Activated T-helper 1 cell treated with anti-CD3 and anti-CD28 coated beads, Interleukin-12 subunit alpha, Interleukin-12 subunit beta, Interleukin-2, Interleukin-4 antibody, amounts not matched to agents 30 ng/mL and 10 ng/mL and 1 ng/mL, durations not matched to agents 14 hours and 24 hours and 36 hours (primary cell): ENCODE measurements at regions of chr2 and their contacts with region 1.

Region 1: DNA sequence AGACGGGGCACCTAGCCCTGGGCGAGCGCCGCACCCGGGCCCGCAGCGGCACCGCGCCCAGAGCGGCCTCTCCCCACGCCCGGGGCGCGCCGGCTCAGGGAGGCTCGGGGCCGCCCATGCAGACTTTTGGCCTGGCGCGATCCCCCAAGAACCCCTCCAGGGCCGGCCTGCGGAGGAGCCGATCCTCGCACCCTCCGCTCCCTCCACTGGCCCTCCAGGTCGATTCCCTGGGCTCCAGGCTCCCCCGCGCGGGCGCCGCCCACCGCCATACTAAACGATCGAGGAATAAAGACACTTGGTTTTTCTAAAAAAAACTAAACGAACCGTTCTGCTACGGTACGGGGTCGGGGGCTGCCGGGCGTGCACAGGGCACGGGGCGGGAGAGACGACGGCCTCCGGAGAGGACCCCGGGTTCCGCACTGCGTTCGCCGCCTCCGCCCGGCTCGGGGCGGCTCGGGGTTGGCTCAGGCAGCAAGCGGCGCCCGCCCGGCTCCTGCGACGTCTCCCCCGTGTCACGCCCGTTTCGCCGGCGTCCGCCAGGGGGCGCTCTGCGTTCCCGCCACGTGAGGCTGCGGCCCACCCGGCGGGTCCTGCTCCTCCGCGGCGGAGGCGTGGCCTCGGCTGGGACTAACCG is 365 bp upstream of the KHK start:
- DNase-seq: peak; percentile 99
- H3K4me3 Mint-ChIP-seq: peak overlapping the region; percentile 89
- H3K27ac Mint-ChIP-seq: peak overlapping the region; percentile 76
- H3K4me1 Mint-ChIP-seq: peaks cover 27% of the 10 kb centered on the region
- H3K27me3 Mint-ChIP-seq: no peaks in the 10 kb centered on the region

Region 2: DNA sequence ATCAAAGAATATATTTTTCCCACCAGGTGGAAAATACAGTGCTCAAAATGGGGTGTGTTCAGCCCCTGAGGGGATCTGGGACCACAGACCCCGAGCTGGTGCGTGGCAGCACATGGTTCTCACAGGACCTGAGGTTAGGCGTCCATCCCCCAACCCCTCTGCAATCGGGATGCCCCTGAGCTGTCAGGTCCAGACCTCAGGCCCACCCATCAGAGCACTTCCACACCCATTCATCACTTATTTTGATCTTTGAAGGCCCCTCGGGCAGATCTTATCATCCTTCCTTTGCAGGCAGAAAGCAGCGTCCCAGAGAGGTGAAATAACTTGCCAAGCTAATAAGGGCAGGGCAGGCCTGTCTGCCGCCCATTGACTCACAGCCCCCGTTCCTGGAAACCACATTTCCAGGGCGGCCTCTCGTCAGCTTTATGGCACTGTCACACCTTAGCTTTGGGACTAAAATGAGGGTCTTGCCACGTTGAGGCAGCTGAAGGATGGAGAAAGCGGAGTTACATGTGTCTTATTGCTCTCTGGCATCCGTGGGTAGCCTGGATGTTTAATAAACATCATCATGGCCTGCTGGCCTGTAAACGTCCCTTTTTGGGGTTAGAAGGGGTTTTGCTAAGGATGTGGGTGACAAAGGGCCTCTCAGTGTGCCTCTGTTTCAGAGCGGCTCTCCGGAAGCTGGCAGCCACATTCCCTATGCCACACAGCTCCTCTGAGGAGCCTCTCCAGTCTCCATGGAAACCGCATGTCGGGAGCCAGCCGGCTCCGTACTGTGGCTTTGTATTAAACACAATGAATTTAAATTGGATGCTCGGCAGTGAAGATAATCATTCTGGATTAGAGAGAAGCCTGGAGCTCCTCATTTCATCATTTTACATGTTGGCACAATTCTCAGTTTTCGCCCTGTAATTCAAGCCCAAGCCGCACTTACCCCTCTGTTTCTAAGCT is 174.0 kb before region 1 on chr2:
- intact Hi-C with region 1: no loop called
- DNase-seq: no peak
- H3K4me3 Mint-ChIP-seq: no peak overlapping the region
- H3K27ac Mint-ChIP-seq: no peak overlapping the region
- H3K4me1 Mint-ChIP-seq: no peaks in the 10 kb centered on the region
- H3K27me3 Mint-ChIP-seq: peaks cover 32% of the 10 kb centered on the region

Region 3: GRCh38 chr2:27032495-27033252 is 53.5 kb before region 1 on chr2 and contains the start of gene TMEM214:
- intact Hi-C with region 1: loop called (anchors 1 kb)
- DNase-seq: peak; percentile 83
- H3K4me3 Mint-ChIP-seq: peak within 1 kb of the TSS; percentile 96
- H3K27ac Mint-ChIP-seq: peak within 1 kb of the TSS; percentile 90
- H3K4me1 Mint-ChIP-seq: peaks cover 46% of the 10 kb centered on the region
- H3K27me3 Mint-ChIP-seq: no peaks in the 10 kb centered on the region
- total RNA-seq, gene TMEM214: 97.5 and 98.1 TPM in 2 replicates

Region 4: DNA sequence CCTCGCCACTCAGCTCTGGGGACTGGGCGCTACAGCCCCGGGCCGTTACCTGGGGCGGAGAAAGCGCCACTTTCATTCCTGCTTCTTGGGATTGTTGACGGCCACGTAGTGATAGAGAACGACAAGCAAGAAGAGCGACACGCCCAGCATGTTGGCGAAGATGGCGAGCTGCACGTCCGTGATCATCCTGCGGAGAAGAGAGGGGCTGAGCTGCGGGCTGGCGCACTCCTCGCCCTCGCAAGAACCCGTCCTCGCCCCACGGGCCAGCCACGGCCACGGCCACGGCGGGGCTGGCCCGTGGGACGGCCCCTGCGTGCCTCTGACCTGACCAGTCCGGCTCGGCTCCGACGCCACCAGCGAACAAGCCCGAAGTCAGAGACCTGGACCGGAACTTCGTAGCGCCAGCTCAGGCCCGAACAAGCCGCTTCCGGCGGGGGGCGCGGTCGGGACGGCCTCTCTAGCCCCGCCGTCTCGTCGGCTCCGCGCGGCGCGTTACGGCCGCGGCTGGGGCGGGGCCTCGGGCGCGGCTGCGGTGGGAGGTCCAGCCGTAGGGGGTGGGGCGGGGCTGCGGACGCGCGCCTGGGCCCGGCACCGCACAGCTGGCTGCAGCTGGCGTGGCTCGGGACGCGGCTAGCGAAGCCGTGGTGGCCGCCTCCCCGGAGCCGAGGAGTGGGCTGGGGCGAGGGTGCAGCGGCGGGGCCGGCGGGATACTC is 14.8 kb before region 1 on chr2 and contains the start of gene OST4:
- intact Hi-C with region 1: loop called (anchors 1 kb)
- DNase-seq: peak; percentile 91
- H3K4me3 Mint-ChIP-seq: peak within 1 kb of the TSS; percentile 99
- H3K27ac Mint-ChIP-seq: peak within 1 kb of the TSS; percentile 98
- H3K4me1 Mint-ChIP-seq: peaks cover 84% of the 10 kb centered on the region
- H3K27me3 Mint-ChIP-seq: peaks cover 2% of the 10 kb centered on the region
- total RNA-seq, gene OST4: 322 and 332 TPM in 2 replicates

Region 5: DNA sequence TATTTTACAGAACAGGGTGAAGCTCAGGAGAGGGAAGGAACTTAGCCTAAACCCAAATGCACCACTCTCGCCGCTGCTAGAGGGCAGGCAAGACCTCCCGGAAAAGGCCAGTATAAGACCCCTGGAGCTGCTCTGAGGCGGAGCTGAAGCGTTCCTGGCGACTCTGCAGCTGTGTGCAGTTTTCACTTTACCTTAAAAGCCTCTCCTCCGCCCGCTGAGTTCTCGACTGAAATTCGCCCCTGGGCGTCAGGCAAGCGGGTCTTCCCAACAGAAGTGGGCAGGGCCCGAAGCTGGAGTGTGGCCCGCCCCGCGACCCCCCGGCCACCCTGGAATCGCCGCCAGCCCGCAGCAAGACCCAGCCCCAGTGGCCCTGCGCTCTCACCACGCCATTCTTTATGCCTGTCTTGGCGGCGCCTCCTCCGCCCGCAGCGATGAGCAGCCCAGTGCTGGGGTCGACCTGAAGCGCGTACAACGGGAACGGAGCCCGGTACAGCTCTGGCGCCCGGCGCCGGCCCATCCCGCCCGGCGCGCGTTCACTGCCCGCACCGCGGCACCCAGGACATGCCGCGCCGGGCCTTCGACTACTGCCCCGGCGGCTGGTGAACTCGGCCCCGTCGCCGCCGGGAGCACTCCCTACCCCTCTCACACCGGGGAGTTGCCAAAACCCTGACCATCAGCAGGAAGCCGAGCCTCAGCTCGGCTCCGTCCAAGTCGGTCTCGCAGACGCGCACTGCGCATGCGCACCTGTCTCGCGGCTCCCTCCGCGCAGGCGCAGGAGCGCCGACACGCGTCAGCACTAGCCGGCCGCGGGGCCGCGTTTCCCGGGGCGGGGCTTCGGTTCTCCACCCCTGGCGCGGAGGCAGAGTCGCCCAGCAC is 47.9 kb after region 1 on chr2 and contains the start of gene PREB:
- intact Hi-C with region 1: loop called (anchors 1 kb)
- DNase-seq: peak; percentile 99
- H3K4me3 Mint-ChIP-seq: peak within 1 kb of the TSS; percentile 95
- H3K27ac Mint-ChIP-seq: peak within 1 kb of the TSS; percentile 98
- H3K4me1 Mint-ChIP-seq: peaks cover 12% of the 10 kb centered on the region
- H3K27me3 Mint-ChIP-seq: no peaks in the 10 kb centered on the region
- total RNA-seq, gene PREB: 95.9 and 97.1 TPM in 2 replicates

Region 6: GRCh38 chr2:27264753-27265535 is 178.7 kb after region 1 on chr2:
- intact Hi-C with region 1: loop called (anchors 1 kb)
- DNase-seq: peak; percentile 32
- H3K4me3 Mint-ChIP-seq: peak overlapping the region; percentile 43
- H3K27ac Mint-ChIP-seq: peak overlapping the region; percentile 7
- H3K4me1 Mint-ChIP-seq: peaks cover 14% of the 10 kb centered on the region
- H3K27me3 Mint-ChIP-seq: peaks cover 44% of the 10 kb centered on the region